ENCODE measurements at regions of chr5 and their contacts with region 1.

Region 1: DNA sequence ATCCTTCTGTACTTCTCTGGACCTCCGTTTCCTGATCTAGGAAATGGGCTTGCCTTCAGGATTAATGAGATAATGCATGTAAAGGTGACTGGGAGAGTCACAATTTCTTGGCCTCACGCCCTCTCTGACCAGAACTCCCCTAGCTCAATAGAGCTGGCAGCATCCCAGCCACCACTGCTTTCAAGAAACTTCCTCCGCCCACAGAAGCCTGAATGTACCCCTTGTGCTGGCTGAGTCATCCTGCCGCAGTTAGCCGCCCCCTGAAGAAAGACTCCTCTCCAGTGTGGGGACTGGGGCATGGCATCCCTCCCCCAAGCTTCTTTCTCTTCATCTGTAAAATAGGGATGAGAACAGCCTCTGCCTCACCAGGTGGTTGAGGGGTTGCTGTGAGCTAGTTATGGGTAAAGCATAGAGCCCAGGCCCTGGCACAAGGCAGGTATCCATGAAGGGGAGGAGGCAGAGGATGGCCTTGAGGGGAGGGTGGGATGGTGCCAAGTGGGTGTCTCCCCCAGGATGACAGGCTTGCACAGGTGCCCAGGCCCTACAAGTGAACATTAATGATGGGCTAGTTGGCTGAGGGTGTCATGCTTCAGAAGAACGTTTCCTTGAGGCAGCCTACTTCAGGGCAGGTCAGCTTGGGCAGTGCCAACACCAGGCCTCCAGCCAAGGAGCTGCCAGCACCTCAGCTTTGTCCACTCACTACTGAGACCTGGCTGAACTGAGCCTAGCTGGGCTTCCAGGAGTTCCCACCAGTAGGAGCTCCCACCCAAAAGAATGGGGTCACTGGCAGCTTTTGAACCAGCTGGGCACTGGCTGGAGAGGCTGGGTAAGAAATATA is 3.4 kb downstream of the PDLIM4 start:
- DNase-seq: peak; percentile 91
- H3K4me3 ChIP-seq: no peak overlapping the region
- H3K27ac ChIP-seq: peak overlapping the region; percentile 96
- H3K4me1 ChIP-seq: peaks cover 76% of the 10 kb centered on the region
- H3K27me3 ChIP-seq: no peaks in the 10 kb centered on the region
- CTCF ChIP-seq: no peak
- POLR2A ChIP-seq: no peak

Region 2: GRCh38 chr5:131810510-131811249 is 450.3 kb before region 1 on chr5:
- CTCF ChIA-PET with region 1: no interaction called
- POLR2A ChIA-PET with region 1: no interaction called
- dilution Hi-C with region 1: no loop called
- intact Hi-C with region 1: loop called (anchors 10 kb)
- DNase-seq: peak; percentile 27
- H3K4me3 ChIP-seq: no peak overlapping the region
- H3K27ac ChIP-seq: no peak overlapping the region
- H3K4me1 ChIP-seq: peaks cover 21% of the 10 kb centered on the region
- H3K27me3 ChIP-seq: no peaks in the 10 kb centered on the region
- CTCF ChIP-seq: peak; percentile 4 to 8
- POLR2A ChIP-seq: no peak

Region 3: DNA sequence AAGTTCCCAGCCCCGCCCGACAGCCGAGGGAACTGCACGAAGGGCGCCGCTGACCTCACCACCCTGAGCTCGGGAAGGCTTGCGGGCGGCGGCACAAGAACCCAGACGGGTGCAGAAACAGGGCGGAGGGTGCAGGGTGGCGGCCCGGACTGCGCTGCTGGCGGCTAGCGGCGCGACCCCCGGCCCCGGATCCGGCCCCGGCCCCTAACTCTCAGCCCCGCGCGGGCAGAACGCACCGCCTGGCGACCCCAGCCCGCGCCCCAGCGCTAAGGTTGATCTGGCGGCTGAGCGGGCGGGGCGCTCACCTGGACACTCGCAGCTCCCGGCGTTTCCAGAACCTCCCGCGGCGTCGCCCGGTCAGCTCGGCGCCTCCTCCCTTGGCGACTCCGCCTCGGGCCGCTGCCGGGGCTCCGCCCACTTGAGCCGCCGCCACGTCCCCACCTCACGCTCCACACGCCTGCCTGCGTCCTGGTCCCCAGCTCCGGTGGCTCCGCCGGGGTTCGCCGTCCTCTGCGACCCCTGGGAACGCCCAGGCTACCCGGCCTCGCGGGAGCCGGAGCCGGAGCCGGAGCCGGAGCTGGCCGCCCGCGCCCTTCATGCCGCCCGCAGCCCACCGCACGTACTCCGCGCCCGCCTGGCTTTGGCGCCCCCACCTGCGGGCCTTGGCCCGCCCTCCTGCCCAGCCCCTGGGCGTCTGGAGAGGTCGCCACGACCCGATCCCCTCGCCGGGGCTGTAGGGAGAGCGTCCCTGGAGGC is 33.3 kb before region 1 on chr5 and contains the start of gene P4HA2:
- CTCF ChIA-PET with region 1: no interaction called
- POLR2A ChIA-PET with region 1: no interaction called
- dilution Hi-C with region 1: no loop called
- intact Hi-C with region 1: loop called (anchors 1 kb)
- DNase-seq: peak; percentile 71
- H3K4me3 ChIP-seq: peak within 1 kb of the TSS; percentile 44 to 61 (median 46)
- H3K27ac ChIP-seq: peak within 1 kb of the TSS; percentile 28
- H3K4me1 ChIP-seq: no peaks in the 10 kb centered on the region
- H3K27me3 ChIP-seq: peaks cover 0 to 1% of the 10 kb centered on the region in 2 experiments
- CTCF ChIP-seq: no peak
- POLR2A ChIP-seq: peak; percentile 56
- total RNA-seq, gene P4HA2: 37.4 and 37.6 TPM in 2 replicates

Region 4: GRCh38 chr5:132272311-132273210 is 11.6 kb after region 1 on chr5:
- CTCF ChIA-PET with region 1: interaction called, 14 read pairs
- POLR2A ChIA-PET with region 1: no interaction called
- dilution Hi-C with region 1: no loop called
- intact Hi-C with region 1: no loop called
- DNase-seq: peak; percentile 70
- H3K4me3 ChIP-seq: no peak overlapping the region
- H3K27ac ChIP-seq: no peak overlapping the region
- H3K4me1 ChIP-seq: no peaks in the 10 kb centered on the region
- H3K27me3 ChIP-seq: no peaks in the 10 kb centered on the region
- CTCF ChIP-seq: peak; percentile 79 to 81
- POLR2A ChIP-seq: peak; percentile 36

Region 5: GRCh38 chr5:132342291-132343180 is 81.6 kb after region 1 on chr5:
- CTCF ChIA-PET with region 1: no interaction called
- POLR2A ChIA-PET with region 1: no interaction called
- dilution Hi-C with region 1: no loop called
- intact Hi-C with region 1: no loop called
- DNase-seq: no peak
- H3K4me3 ChIP-seq: no peak overlapping the region
- H3K27ac ChIP-seq: no peak overlapping the region
- H3K4me1 ChIP-seq: no peaks in the 10 kb centered on the region
- H3K27me3 ChIP-seq: no peaks in the 10 kb centered on the region
- CTCF ChIP-seq: no peak
- POLR2A ChIP-seq: no peak